SK-N-SH (cell line): ENCODE measurements at regions of chr1 and their contacts with region 1.

Region 1: DNA sequence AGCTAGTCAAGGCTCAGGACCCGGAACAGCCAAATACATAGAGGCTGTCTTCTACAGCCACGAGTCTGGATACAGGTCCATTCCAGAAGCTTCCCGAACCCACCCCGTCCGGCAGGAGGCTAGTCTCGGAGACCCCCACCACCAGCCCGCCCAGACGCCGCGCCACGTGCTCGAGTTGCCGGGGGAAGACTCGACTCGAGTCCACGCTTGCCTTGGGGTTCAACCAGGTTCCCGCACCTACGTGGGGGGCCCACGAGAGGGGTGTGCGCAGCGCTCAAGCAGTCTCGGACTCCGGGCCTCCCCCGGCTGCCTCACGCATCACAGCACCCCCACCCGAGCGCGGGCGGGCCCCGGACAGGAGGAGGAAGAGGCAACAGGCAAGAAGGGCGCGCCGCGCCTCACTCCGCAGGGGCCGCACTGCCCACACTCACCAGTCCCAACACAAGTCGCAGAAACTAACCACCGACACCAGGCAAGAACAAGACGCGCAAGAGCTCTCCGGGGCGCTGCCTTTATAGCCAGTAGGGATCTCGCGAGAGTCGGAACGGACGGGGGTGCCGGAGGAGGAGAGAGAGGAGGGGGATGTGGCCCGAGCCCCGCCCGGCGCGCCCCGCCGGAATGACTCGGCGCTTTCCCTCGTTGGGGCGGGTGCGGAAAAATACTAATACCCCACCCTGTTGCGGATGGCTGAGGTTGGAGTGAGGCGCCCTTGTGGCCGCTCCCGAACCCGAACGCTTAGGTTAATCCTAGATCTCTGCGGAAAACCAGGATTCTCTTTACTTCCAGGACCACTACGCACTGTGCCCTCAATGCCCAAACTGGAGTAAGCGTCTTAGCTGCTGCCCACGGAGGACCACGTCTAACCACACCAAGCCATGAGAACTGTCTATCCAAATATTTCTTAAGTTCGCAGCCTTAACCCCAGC is at the start of gene PRDX1:
- DNase-seq: peak; percentile 97
- H3K4me3 ChIP-seq: peak within 1 kb of the TSS; percentile 75 to 91
- H3K27ac ChIP-seq: peak within 1 kb of the TSS; percentile 92
- H3K4me1 ChIP-seq: peaks cover 6 to 15% of the 10 kb centered on the region in 2 experiments; a peak in 3 of 4 replicates
- H3K27me3 ChIP-seq: no peaks in the 10 kb centered on the region
- CTCF ChIP-seq: peak; percentile 25; the same call in 1 of the 2 replicates
- EP300 ChIP-seq: peak in 1 of 2 experiments; percentile 70; a peak in 2 of 4 replicates
- RAD21 ChIP-seq: no peak
- polyA plus RNA-seq, gene PRDX1: 467 and 551 TPM in 2 replicates

Region 2: DNA sequence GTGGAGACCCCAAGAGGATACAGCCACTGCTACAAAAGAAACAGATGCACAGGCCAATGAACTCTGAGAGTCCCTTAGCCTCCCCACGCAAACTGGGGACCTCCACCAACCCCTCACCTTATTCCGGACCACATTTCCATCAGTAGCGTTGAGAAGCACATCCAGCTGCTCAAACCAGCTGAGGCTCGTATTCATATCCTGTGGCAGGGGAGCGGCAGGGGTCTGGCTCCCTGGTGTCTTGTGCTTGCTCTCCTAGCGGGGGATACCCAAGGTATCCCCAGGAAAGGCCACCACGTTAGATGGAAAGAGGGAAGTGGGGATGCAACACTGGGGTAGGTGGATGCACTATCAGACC is 22.3 kb before region 1 on chr1:
- CTCF ChIA-PET with region 1: interaction called, 3 read pairs
- POLR2A ChIA-PET with region 1: interaction called, 39 read pairs
- DNase-seq: peak; percentile 61
- H3K4me3 ChIP-seq: peak overlapping the region; percentile 71 to 75
- H3K27ac ChIP-seq: 0 out of 4 replicates have a peak overlapping the region, but pooled peaks of 1 of the 2 experiments have one; percentile 31
- H3K4me1 ChIP-seq: peaks cover 0 to 15% of the 10 kb centered on the region in 2 experiments; a peak in 1 of 4 replicates
- H3K27me3 ChIP-seq: no peaks in the 10 kb centered on the region
- CTCF ChIP-seq: no peak
- EP300 ChIP-seq: no peak
- RAD21 ChIP-seq: no peak

Region 3: GRCh38 chr1:45535988-45536766 is 14.5 kb after region 1 on chr1:
- CTCF ChIA-PET with region 1: interaction called, 3 read pairs
- POLR2A ChIA-PET with region 1: interaction called, 16 read pairs
- DNase-seq: no peak
- H3K4me3 ChIP-seq: no peak overlapping the region
- H3K27ac ChIP-seq: no peak overlapping the region
- H3K4me1 ChIP-seq: no peaks in the 10 kb centered on the region
- H3K27me3 ChIP-seq: no peaks in the 10 kb centered on the region
- CTCF ChIP-seq: no peak
- EP300 ChIP-seq: no peak
- RAD21 ChIP-seq: no peak

Region 4: DNA sequence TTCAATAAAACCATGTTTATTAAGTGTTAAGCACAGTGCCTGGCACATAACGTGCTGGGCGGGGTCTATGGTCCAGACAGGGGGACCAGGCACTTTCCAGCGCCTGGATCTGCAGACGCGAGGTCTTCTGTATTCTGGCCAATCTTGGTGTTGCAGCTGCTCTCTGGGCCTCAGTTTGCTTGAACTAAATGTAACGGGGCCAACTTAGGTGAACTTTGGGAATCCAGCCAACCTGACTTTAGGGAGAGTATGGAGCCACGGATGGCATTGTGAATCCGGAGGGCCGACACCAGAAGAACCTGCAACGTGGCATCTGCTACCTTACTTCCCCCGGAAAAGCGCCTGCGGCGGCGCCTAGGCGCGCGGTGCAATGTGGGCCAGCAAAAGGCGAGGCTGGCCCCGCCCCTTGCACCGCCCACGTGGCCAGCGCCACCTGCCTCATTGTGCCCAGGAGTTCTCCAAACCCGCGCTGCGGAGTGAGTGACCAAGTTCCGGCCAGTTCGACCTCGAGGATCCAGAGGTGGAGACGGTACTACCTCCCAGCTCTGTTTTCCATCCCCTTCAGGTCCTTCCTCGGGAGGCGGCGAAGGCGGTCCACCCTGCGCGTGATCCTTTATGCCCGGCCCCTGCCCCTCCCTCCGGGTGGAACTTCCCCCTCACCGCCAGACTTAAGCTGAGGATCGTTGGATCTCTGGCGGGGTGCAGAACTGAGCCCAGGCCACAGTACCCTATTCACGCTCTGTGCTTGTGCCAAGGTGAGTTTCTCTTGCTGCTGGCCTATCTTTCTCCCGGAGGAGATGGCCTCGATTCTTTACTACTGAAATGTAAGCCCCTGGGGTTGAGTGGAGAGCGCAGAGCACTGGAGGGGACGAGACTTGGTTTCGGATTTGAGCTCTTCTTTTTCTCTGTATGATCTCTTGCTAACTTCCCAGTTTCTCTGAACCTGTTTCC is 29.0 kb after region 1 on chr1 and contains the start of gene AKR1A1:
- CTCF ChIA-PET with region 1: interaction called, 5 read pairs
- POLR2A ChIA-PET with region 1: interaction called, 47 read pairs
- DNase-seq: peak; percentile 90
- H3K4me3 ChIP-seq: peak within 1 kb of the TSS; percentile 69 to 72
- H3K27ac ChIP-seq: peak within 1 kb of the TSS; percentile 80 to 90
- H3K4me1 ChIP-seq: peaks cover 6 to 10% of the 10 kb centered on the region in 2 experiments; a peak in 2 of 4 replicates
- H3K27me3 ChIP-seq: no peaks in the 10 kb centered on the region
- CTCF ChIP-seq: no peak
- EP300 ChIP-seq: no peak
- RAD21 ChIP-seq: no peak
- polyA plus RNA-seq, gene AKR1A1: 156 and 185 TPM in 2 replicates

Region 5: GRCh38 chr1:45583264-45583665 is 61.6 kb after region 1 on chr1:
- CTCF ChIA-PET with region 1: no interaction called
- POLR2A ChIA-PET with region 1: interaction called, 32 read pairs
- DNase-seq: peak; percentile 95
- H3K4me3 ChIP-seq: peak overlapping the region; percentile 76 to 97
- H3K27ac ChIP-seq: peak overlapping the region; percentile 62 to 90
- H3K4me1 ChIP-seq: peaks cover 5 to 9% of the 10 kb centered on the region in 2 experiments; a peak in 3 of 4 replicates
- H3K27me3 ChIP-seq: no peaks in the 10 kb centered on the region
- CTCF ChIP-seq: no peak
- EP300 ChIP-seq: no peak
- RAD21 ChIP-seq: no peak

Region 6: DNA sequence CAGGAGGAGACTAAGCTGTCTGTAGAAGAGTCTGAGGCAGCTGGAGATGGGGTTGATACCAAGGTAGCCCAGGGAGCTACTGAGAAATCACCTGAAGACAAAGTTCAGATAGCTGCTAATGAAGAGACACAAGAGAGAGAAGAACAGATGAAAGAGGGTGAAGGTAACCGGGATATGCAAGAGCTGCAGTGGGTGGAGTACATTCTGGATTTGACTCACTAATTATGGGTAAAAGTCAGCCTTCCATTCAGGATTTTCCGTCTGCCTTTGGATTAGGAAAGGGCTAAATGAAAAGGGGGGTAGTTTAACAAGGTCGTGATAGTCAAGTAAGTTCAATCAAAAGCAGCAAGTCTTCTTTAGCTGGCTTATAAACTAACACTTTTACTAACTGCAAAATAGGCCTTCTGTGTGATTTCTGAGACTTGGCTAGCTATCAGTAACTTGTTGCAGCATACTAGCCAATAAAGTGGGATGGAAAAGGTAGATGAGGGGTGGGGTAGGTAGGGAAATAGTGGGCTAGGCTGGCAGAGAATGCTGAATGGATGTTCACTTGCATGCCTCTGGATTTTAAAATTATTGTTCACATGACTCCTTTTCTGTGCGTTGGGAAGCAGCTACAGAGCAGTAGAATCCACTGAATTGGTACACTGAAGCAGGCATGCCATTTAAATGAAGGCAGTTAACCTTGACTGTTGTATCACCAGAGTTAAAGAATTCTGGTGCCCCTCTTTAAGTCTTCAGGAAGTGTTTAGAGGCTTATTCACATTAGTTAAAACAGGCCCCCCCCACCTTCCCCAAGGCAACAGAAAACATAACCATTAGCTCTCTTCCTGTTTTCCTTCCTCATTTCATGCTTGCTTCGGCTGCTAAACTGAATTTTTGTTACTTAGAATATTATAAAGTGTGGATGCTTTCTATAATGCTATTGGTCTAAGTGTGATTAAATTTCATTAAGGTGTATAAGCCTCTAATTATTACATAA is 86.8 kb after region 1 on chr1:
- CTCF ChIA-PET with region 1: no interaction called
- POLR2A ChIA-PET with region 1: no interaction called
- DNase-seq: no peak
- H3K4me3 ChIP-seq: no peak overlapping the region
- H3K27ac ChIP-seq: no peak overlapping the region
- H3K4me1 ChIP-seq: peaks cover 0 to 2% of the 10 kb centered on the region in 2 experiments; a peak in 1 of 4 replicates
- H3K27me3 ChIP-seq: no peaks in the 10 kb centered on the region
- CTCF ChIP-seq: no peak
- EP300 ChIP-seq: no peak
- RAD21 ChIP-seq: no peak